Endothelial cell of umbilical vein (primary cell): ENCODE measurements at regions of chr4 and their contacts with region 1.

Region 1: GRCh38 chr4:113435893-113436292 is 325.6 kb downstream of the CAMK2D start:
- DNase-seq: peak; percentile 94
- H3K4me3 ChIP-seq: peak overlapping the region in 1 of 3 experiments; percentile 44
- H3K27ac ChIP-seq: peak overlapping the region; percentile 78
- H3K4me1 ChIP-seq: peaks cover 22% of the 10 kb centered on the region
- H3K27me3 ChIP-seq: no peaks in the 10 kb centered on the region
- CTCF ChIP-seq: no peak
- POLR2A ChIP-seq: no peak

Region 2: GRCh38 chr4:113248320-113248719 is 187.6 kb before region 1 on chr4:
- CTCF ChIA-PET with region 1: no interaction called
- POLR2A ChIA-PET with region 1: no interaction called
- dilution Hi-C with region 1: no loop called
- intact Hi-C with region 1: no loop called
- DNase-seq: no peak
- H3K4me3 ChIP-seq: no peak overlapping the region
- H3K27ac ChIP-seq: no peak overlapping the region
- H3K4me1 ChIP-seq: no peaks in the 10 kb centered on the region
- H3K27me3 ChIP-seq: no peaks in the 10 kb centered on the region
- CTCF ChIP-seq: no peak
- POLR2A ChIP-seq: no peak

Region 3: GRCh38 chr4:113452868-113453620 is 17.2 kb after region 1 on chr4:
- CTCF ChIA-PET with region 1: no interaction called
- POLR2A ChIA-PET with region 1: no interaction called
- dilution Hi-C with region 1: no loop called
- intact Hi-C with region 1: loop called (anchors 1 kb)
- DNase-seq: peak; percentile 95
- H3K4me3 ChIP-seq: peak overlapping the region in 1 of 3 experiments; percentile 29
- H3K27ac ChIP-seq: peak overlapping the region; percentile 78
- H3K4me1 ChIP-seq: peaks cover 17% of the 10 kb centered on the region
- H3K27me3 ChIP-seq: no peaks in the 10 kb centered on the region
- CTCF ChIP-seq: no peak
- POLR2A ChIP-seq: peak; percentile 25